Transverse colon (tissue), 4 donors: ENCODE measurements at regions of chr3 and their contacts with region 1.

Region 1: GRCh38 chr3:56251343-56251945 is 216.8 kb downstream of the ERC2 start:
- DNase-seq: peak; percentile 17
- H3K4me3 ChIP-seq: no peak overlapping the region
- H3K27ac ChIP-seq: no peak overlapping the region
- H3K4me1 ChIP-seq: no peaks in the 10 kb centered on the region
- H3K27me3 ChIP-seq: peaks cover 3% of the 10 kb centered on the region
- CTCF ChIP-seq: peak; percentile 58 to 82 (median 72)
- EP300 ChIP-seq: no peak
- POLR2A ChIP-seq: no peak

Region 2: DNA sequence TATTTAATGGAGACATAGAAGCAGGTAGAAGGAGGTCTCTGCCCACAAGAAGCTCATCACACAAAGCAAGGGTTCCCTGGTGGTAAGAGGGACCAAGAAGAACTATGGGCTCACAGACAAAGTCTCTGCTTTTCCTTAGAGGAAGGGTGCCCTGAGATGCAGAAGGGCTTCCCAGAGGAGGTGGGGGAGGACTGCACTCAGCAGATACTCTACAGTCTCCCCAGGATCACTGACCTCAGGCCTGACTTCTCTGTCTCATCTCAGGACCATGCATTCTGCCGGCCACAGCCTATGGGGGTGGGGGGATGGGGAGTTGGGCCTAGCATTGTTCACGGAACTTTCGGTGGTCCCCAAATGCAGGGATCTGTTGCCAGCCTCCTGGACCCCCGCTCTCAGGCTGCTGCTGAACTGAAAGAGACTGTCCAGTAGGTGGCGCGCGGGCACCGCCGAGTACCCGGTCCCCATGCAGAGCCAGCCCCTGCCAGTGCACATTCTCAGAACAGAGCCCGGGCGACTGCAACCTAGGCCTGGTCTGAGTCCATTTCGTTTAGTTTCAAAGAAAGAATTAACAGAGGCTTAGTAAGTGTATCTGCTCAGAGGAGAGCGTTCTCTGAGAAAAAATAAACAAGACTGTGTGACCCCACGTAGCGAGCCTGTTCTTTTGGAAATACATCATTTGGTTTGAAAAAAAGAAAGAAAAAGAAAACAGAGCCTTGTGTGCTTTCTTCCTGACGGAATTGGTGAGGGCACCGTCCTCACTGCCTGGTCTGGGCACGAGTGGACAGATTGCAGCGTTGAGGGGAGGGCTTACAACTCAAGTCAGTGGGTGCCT is 1397.7 kb before region 1 on chr3:
- in situ Hi-C with region 1: loop called in 2 of 4 experiments (anchors 25 kb)
- intact Hi-C with region 1: no loop called
- DNase-seq: peak; percentile 72
- H3K4me3 ChIP-seq: no peak overlapping the region
- H3K27ac ChIP-seq: no peak overlapping the region
- H3K4me1 ChIP-seq: peaks cover 0 to 9% (median 2%) of the 10 kb centered on the region in 4 donors
- H3K27me3 ChIP-seq: no peaks in the 10 kb centered on the region
- CTCF ChIP-seq: peak; percentile 80 to 87 (median 83)
- EP300 ChIP-seq: no peak
- POLR2A ChIP-seq: no peak